ENCODE measurements at regions of chr3 and their contacts with region 1.

Region 1: GRCh38 chr3:39383045-39383880 is at the start of gene SLC25A38:
- DNase-seq: peak; percentile 71 to 94 (median 85)
- H3K4me3 ChIP-seq: peak within 1 kb of the TSS; percentile 63 to 99 (median 93)
- H3K27ac ChIP-seq: peak within 1 kb of the TSS; percentile 21 to 96 (median 88)
- H3K27me3 ChIP-seq: no peaks in the 10 kb centered on the region
- CTCF ChIP-seq: peak in 46 of 56 donors; percentile 3 to 56 (median 38)
- total RNA-seq, gene SLC25A38: 16.2 to 32.9 (median 23.4) TPM

Region 2: DNA sequence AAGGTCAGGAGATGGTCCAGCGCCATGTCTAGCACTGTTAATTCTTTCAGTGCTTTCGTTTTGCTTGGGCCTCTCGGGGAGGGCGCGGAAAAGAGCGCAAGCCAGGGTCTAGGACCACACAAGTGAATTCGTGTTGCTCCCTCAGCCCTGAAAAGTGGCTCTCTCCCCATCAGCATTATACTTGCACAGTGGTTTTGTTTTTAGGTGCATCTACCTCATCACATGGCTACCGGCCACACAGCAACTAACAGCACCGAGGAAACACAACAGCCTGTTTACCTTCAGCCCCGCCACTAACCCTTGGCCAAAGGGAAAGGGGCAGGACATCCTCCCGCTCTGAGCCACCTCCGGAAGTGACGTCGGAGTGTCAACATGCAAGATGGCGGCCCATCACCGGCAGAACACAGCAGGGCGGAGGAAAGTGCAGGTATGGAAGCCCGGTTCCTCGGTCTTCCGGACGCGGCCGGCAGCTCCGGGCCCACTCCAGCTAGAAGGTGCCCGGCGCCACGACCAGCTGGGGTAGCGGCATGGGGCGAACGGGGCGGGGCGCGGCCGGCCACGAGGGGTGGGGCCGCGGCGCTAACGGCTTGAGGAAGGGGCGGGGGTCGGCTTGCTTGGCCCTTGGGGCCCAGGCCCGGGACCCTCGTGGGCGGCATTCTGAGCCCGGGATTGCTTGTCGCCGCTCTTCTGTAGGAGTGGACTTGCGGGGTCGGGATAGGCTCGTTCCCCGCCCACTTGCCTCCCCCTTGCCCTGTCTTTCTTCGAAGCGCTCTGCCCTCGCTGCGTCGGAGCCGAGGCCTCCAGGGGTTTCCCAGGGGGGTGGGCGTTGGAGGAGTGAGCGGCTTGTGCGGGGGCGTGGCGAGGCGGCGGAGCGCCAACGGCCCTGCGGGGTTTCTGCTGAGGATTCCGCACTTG is 331.4 kb before region 1 on chr3 and contains the starts of genes SCN11A and WDR48:
- intact Hi-C with region 1: loop called in 1 of 2 experiments (anchors 5 kb)
- DNase-seq: peak; percentile 89 to 98 (median 96)
- H3K4me3 ChIP-seq: peak within 1 kb of the TSS; percentile 65 to 100 (median 97)
- H3K27ac ChIP-seq: peak within 1 kb of the TSS; percentile 32 to 98 (median 91)
- H3K27me3 ChIP-seq: no peaks in the 10 kb centered on the region
- CTCF ChIP-seq: peak in 18 of 56 donors; percentile 2 to 47 (median 23)
- total RNA-seq, gene SCN11A: 0.19 to 1.4 (median 0.68) TPM
- total RNA-seq, gene WDR48: 45.0 to 93.1 (median 69.8) TPM

Region 3: DNA sequence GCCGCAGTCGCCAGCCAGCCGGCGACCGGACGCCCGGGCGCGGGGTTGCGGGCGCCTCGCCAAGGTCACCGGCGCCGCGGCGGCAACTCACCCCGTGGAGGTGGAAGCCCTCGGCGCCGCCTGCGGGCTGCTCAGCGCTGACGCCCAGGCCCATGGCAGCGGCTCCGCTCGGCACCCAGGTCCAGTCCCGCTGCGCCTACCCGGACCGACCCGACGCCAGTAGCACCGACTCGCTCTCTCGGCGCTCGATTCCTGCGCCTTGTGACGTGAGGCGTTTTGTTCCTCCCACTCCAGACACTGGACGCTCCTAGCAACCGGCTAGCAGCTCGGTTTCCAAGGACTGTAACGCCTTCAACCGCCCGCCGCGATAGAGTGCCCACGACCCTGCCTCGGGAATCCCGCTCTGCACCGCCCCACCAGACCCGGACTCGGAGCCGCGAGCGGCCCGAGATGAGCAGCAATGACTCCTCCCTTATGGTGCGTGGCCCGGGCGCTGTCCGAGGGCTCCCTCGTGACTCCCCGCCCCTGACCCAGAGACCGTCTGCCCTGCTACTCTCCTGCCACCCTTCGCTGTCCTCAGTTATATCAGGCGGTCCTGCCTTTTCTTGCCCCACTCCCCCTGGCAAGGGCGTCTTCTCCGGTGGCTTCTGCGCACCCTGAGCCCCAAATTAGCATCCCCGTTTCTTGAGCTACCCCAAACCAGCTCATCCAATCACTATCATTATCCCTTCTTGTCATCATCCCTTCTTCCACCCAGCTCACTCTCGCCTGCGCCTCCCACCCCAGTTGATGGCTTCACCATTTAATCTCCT is 275.7 kb before region 1 on chr3 and contains the starts of genes GORASP1 and TTC21A:
- intact Hi-C with region 1: loop called in 1 of 2 experiments (anchors 10 kb)
- DNase-seq: peak; percentile 86 to 96 (median 94)
- H3K4me3 ChIP-seq: peak within 1 kb of the TSS; percentile 61 to 99 (median 92)
- H3K27ac ChIP-seq: peak within 1 kb of the TSS; percentile 4 to 97 (median 90)
- H3K27me3 ChIP-seq: no peaks in the 10 kb centered on the region
- CTCF ChIP-seq: peak in 24 of 56 donors; percentile 11 to 50 (median 18)
- total RNA-seq, gene GORASP1: 52.3 to 94.4 (median 70.3) TPM
- total RNA-seq, gene TTC21A: 12.8 to 44.7 (median 24.4) TPM

Region 4: DNA sequence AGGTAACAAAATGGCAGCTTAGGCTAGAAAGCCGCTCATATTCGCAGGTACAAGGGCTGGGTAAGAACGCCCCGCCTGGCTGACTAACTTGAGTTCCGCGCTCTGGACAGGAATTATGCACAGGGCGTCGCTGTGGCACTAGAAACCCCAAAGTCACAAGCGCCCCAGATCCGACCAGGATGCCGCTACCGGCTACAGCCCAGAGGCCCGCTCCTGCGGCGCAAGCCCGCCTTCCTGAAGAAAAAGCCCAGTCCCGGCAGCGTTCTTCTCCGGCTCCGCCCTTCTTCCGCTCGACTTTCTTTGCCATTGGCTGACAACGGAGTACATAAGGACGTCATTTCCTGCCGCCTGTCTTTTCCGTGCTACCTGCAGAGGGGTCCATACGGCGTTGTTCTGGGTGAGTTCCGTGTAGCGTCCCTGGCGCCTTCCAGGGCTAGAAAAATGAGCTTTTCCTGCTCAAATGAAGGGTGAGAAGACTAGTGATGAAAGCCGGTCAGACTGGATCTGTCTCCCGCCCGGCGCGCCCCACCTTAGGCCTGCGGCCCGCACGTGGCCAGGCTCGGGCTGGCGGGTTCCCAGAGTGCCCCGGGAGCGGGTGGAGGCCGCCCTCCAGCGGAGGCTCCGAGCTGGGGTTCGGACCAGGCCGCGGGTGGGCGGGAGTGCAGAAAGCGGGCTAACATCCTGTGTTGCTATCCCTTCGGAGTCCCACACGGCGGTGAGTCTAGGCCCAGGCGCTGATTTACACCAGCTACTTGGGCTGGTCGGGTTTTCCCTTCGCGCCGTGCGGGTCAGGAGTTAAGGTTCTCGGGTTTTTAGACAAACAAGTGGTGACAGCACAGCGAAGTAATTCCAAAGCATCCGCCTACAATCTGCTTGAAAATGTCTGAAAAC is 23.4 kb after region 1 on chr3 and contains the start of gene RPSA:
- intact Hi-C with region 1: loop called in 1 of 2 experiments (anchors 1 kb)
- DNase-seq: peak; percentile 88 to 97 (median 97)
- H3K4me3 ChIP-seq: peak within 1 kb of the TSS; percentile 63 to 99 (median 85)
- H3K27ac ChIP-seq: peak within 1 kb of the TSS in 57 of 59 donors; percentile 27 to 92 (median 76)
- H3K27me3 ChIP-seq: no peaks in the 10 kb centered on the region
- CTCF ChIP-seq: peak in 53 of 56 donors; percentile 7 to 72 (median 45)
- total RNA-seq, gene RPSA: 285 to 584 (median 399) TPM

Measured in dorsolateral prefrontal cortex (tissue), 120 donors.